PC-9 (cell line): ENCODE measurements at regions of chr9 and their contacts with region 1.

Region 1: DNA sequence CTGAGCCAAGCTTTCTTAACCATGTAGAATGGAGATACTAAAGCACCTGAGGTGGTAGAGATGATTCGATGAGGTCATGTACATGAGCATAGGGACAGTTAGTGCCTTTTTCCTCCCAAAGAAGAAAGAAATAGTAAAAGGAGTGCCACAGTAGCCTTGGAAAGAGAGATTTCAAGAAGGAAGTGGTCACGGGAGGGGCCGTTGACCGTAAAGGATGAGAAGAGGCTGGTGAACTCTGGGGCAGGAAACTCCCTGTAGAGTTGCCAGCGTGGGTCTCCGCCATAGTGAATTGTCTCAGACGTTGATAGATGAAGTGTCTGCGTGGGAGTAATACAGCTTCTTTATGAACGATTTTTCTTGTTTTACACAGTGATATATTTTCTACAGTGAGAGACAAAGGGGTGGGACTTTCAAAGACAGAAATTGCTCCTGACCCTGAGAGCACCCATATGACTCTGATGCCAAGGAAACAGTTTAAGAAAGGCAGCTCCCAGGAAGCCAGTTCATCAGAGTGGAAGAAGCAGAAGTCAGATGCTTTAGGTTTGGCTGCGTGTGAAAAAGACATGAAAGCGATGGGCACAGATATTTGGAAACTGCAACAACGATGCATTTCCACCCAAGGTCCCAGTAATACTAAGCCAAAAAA is 41.3 kb downstream of the UGCG start:
- DNase-seq: no peak
- H3K4me3 ChIP-seq: no peak overlapping the region
- H3K27ac ChIP-seq: no peak overlapping the region
- H3K4me1 ChIP-seq: no peaks in the 10 kb centered on the region
- H3K27me3 ChIP-seq: no peaks in the 10 kb centered on the region
- CTCF ChIP-seq: no peak

Region 2: DNA sequence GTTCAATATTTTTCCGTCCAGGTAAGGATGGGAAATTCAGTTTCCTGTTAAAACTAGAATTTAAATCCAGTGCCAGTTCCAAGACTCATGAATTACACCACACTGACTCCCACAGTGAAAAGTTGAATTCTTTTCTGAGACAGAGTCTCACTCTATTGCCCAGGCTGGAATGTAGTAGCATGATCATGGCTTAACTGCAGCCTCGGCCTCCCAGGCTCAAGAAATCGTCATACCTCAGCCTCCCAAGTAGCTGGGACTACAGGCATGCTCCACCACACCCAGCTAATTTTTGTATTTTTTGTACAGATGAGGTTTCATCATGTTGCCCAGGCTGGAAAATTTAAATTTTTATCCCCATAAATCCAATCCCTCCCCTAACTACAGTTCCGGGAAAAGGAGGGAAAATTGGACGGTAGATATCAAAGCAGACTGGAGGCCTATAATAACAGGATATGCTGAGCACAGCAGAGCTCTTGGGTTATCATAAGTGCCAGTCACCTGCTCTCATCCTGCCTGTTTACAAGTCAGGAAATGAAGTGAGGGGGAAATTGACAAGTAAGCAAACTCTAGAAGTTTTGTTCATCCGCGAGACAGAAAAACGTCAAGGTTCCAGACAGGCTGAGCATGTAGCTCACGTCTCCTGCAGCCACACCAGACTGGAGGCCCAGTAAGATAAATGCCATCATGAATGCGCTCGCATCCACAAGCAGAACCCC is 64.4 kb after region 1 on chr9:
- CTCF ChIA-PET with region 1: no interaction called
- POLR2A ChIA-PET with region 1: interaction called, 19 read pairs
- intact Hi-C with region 1: no loop called
- DNase-seq: no peak
- H3K4me3 ChIP-seq: no peak overlapping the region
- H3K27ac ChIP-seq: no peak overlapping the region
- H3K4me1 ChIP-seq: 0 out of 2 replicates have a peak, but pooled peaks cover 6% of the 10 kb centered on the region
- H3K27me3 ChIP-seq: no peaks in the 10 kb centered on the region
- CTCF ChIP-seq: no peak

Region 3: GRCh38 chr9:112020680-112021596 is 83.0 kb after region 1 on chr9:
- CTCF ChIA-PET with region 1: no interaction called
- POLR2A ChIA-PET with region 1: interaction called, 10 read pairs
- intact Hi-C with region 1: no loop called
- DNase-seq: peak in 1 of 2 experiments; percentile 96
- H3K4me3 ChIP-seq: no peak overlapping the region
- H3K27ac ChIP-seq: peak overlapping the region; percentile 93
- H3K4me1 ChIP-seq: peaks cover 19% of the 10 kb centered on the region
- H3K27me3 ChIP-seq: no peaks in the 10 kb centered on the region
- CTCF ChIP-seq: no peak

Region 4: DNA sequence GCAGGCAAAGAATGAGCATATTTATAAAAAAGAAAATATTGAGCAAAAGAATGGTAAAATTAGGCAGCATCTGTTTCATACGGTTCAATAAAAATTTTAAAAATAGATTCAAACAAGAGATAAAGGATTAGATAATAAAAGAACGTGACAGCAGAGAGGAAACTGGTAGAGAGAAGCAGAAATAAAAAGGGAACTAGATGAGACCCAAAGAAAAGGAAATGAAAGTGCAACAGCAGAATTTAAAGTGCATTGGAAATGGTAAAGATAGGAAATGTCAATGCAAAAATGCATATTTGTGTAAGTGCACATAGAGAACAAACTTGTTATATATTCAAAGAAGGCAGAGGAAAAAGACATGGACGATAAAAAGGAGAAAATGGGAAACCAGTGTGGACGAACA is 167.0 kb after region 1 on chr9:
- CTCF ChIA-PET with region 1: no interaction called
- POLR2A ChIA-PET with region 1: no interaction called
- intact Hi-C with region 1: no loop called
- DNase-seq: no peak
- H3K4me3 ChIP-seq: no peak overlapping the region
- H3K27ac ChIP-seq: no peak overlapping the region
- H3K4me1 ChIP-seq: peaks cover 11% of the 10 kb centered on the region
- H3K27me3 ChIP-seq: no peaks in the 10 kb centered on the region
- CTCF ChIP-seq: no peak

Region 5: GRCh38 chr9:112327718-112328464 is 390.0 kb after region 1 on chr9:
- CTCF ChIA-PET with region 1: no interaction called
- POLR2A ChIA-PET with region 1: no interaction called
- intact Hi-C with region 1: no loop called
- DNase-seq: peak in 1 of 2 experiments; percentile 60
- H3K4me3 ChIP-seq: no peak overlapping the region
- H3K27ac ChIP-seq: peak overlapping the region; percentile 19
- H3K4me1 ChIP-seq: peaks cover 63% of the 10 kb centered on the region
- H3K27me3 ChIP-seq: no peaks in the 10 kb centered on the region
- CTCF ChIP-seq: no peak